HEK293T (cell line): ENCODE measurements at regions of chr3 and their contacts with region 1.

Region 1: DNA sequence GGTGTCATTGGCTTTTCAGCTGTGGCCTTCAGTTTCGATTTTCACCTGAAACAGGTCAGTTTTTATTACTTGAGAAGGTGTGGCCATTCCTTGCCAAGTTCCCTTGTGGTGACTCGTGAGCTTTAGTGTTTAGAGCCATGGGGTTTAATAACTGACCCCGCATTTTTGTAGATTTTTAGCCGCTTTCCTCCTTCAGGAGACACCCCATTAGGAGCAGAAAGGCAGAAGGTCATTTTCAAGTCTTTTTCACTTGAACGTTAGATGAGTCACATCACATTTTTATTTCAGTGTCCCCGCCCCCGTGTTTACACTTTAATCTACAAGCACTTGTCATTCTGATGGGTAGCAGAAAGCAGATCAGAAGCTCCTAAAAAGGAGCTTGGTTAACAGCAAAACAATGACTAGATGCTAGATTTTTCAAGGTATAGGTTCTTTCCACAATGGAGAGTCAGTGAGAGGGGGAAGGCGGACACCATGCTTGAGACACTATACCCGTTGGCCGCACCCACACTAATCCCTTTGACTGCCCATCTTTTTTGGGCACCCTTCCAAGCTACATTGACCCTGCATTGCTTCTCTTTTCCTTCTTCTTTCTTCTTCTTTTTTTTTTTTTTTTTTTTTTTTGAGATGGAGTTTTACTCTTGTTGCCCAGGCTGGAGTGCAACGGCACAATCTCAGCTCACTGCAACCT is 132.7 kb downstream of the GHSR start:
- DNase-seq: no peak

Region 2: GRCh38 chr3:172332256-172333041 is 16.9 kb after region 1 on chr3:
- CTCF ChIA-PET with region 1: interaction called, 18 read pairs
- POLR2A ChIA-PET with region 1: interaction called, 3 read pairs
- DNase-seq: peak; percentile 72

Region 3: DNA sequence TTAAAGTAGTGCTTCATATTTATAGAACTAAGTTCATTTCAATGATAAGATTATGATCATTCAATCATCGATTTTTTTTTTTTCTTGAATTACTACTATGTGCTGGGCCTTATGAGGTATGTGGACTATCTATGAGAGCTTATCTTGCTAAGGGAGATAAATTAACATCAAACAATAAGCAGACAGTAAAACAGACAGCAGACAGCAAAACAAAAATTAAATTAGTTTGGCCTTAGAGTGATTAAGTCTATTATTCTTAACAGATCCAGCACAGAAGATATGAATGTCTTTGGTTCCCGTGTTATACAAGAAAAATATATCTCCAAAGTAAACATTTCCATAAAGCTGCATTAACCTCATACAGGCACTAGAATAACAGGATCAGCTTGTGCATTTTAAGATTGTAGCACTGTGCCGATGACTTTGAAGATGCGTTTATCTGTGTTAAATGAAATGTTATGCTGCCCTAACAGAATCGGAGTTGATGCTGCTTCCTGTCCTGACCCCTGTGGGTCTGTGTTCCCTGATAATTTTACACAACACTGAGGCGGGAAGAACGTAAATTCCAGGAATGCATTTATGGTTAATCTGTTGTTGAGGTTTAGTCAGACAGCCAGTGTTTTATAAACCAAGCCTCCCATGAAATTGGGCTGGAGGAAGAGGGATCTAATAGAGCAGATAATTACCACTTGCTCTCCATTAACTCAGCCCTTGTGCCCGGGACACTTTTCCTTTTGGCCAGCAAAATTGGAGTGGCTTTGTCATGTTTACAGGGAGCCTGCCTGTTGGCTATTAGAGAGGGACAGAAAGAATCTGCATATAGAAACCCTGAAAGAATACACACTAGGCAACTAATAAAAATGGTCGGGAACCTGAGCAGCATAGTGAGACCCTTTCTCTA is 51.9 kb after region 1 on chr3:
- CTCF ChIA-PET with region 1: no interaction called
- POLR2A ChIA-PET with region 1: no interaction called
- DNase-seq: no peak